ENCODE measurements at regions of chr6 and their contacts with region 1.

Region 1: DNA sequence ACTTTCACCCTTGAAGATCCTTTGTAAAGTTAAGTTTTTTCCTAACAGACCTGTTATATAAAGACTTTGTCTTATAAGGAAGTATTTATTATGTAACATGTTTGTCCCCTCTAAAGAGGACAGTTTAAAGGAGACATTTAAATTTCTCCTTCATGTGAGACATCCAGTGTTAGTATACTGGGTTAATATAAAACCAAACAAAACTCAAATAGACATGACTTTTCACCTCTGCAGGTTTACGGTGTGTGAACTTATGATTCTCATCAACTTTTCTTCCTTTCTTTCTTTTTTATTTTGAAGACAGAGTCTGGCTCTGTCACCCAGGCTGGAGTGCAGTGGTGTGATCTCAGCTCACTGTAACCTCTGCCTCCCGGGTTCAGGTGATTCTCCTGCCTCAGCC is 17.4 kb upstream of the MPC1 start:
- DNase-seq: no peak
- ATAC-seq: no peak

Region 2: DNA sequence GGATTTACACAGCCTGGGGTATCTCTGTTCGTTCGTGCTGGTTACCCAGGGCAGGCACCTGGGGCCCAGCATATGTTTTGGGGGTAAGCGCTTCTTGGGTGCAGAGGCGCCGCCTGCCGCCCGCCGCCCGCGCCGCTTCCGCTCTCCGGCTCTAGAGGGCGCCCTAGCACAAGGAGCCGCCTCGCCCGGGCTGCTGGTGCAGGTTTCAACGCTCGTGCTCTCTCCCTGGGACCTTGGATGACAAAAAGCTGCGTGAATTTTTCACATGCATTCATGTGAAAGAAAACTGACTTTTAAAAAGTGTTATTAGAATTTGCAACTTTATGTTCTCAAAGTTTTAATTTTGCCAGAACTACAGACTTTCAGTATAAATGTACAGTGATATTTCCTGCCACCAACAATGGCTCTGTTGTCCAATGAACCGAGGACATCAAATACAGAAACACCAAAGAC is 124.4 kb before region 1 on chr6:
- intact Hi-C with region 1: loop called (anchors 1 to 5 kb)
- DNase-seq: peak; percentile 72
- ATAC-seq: peak; percentile 78 to 87

Region 3: GRCh38 chr6:166313255-166314070 is 86.7 kb before region 1 on chr6:
- intact Hi-C with region 1: loop called in 1 of 2 experiments (anchors 5 kb)
- DNase-seq: no peak
- ATAC-seq: peak; percentile 68 to 74

Measured in left cardiac atrium (tissue), 4 donors.